ENCODE measurements at regions of chr18 and their contacts with region 1.

Region 1: GRCh38 chr18:33231474-33232317 is 208.8 kb downstream of the CCDC178 start:
- DNase-seq: peak in 4 of 5 donors; percentile 46 to 63 (median 48)
- ATAC-seq: peak; percentile 42 to 73 (median 68)
- H3K4me3 ChIP-seq: no peak overlapping the region
- H3K27ac ChIP-seq: no peak overlapping the region
- H3K4me1 ChIP-seq: no peaks in the 10 kb centered on the region
- H3K27me3 ChIP-seq: no peaks in the 10 kb centered on the region
- CTCF ChIP-seq: peak; percentile 75 to 93 (median 83)
- POLR2A ChIP-seq: no peak

Region 2: GRCh38 chr18:33282709-33283333 is 51.1 kb after region 1 on chr18:
- intact Hi-C with region 1: no loop called
- DNase-seq: peak in 1 of 5 donors; percentile 45
- ATAC-seq: no peak
- H3K4me3 ChIP-seq: no peak overlapping the region
- H3K27ac ChIP-seq: no peak overlapping the region
- H3K4me1 ChIP-seq: no peaks in the 10 kb centered on the region
- H3K27me3 ChIP-seq: no peaks in the 10 kb centered on the region
- CTCF ChIP-seq: no peak
- POLR2A ChIP-seq: no peak

Region 3: GRCh38 chr18:33761363-33761762 is 529.7 kb after region 1 on chr18:
- intact Hi-C with region 1: loop called in 8 of 10 experiments (anchors 2 to 10 kb)
- DNase-seq: peak in 2 of 5 donors; percentile 26 to 43
- ATAC-seq: peak in 2 of 4 donors; percentile 53 to 59
- H3K4me3 ChIP-seq: no peak overlapping the region
- H3K27ac ChIP-seq: no peak overlapping the region
- H3K4me1 ChIP-seq: peaks cover 0 to 3% (median 0%) of the 10 kb centered on the region in 12 donors
- H3K27me3 ChIP-seq: no peaks in the 10 kb centered on the region
- CTCF ChIP-seq: peak in 10 of 12 donors; percentile 7 to 50 (median 38)
- POLR2A ChIP-seq: no peak

Measured in heart left ventricle (tissue), 16 donors.